ENCODE measurements at regions of chr21 and their contacts with region 1.

Region 1: GRCh38 chr21:33479679-33480480 is at the start of gene TMEM50B:
- DNase-seq: peak; percentile 96
- H3K4me3 Mint-ChIP-seq: peak within 1 kb of the TSS; percentile 90
- H3K27ac Mint-ChIP-seq: peak within 1 kb of the TSS; percentile 81
- H3K4me1 Mint-ChIP-seq: peaks cover 21% of the 10 kb centered on the region
- H3K27me3 Mint-ChIP-seq: peaks cover 4% of the 10 kb centered on the region
- total RNA-seq, gene TMEM50B: 26.5 to 28.2 TPM

Region 2: GRCh38 chr21:33491373-33492102 is 11.7 kb after region 1 on chr21 and contains the start of gene DNAJC28:
- CTCF ChIA-PET with region 1: interaction called, 13 read pairs
- POLR2A ChIA-PET with region 1: interaction called, 53 read pairs
- DNase-seq: peak; percentile 92
- H3K4me3 Mint-ChIP-seq: peak within 1 kb of the TSS; percentile 95
- H3K27ac Mint-ChIP-seq: peak within 1 kb of the TSS; percentile 59
- H3K4me1 Mint-ChIP-seq: peaks cover 10% of the 10 kb centered on the region
- H3K27me3 Mint-ChIP-seq: peaks cover 21% of the 10 kb centered on the region
- total RNA-seq, gene DNAJC28: 0.55 to 0.60 TPM

Region 3: GRCh38 chr21:33588485-33589335 is 108.8 kb after region 1 on chr21 and contains the start of gene DONSON:
- CTCF ChIA-PET with region 1: interaction called, 5 read pairs
- POLR2A ChIA-PET with region 1: interaction called, 27 read pairs
- DNase-seq: peak; percentile 89
- H3K4me3 Mint-ChIP-seq: peak within 1 kb of the TSS; percentile 94
- H3K27ac Mint-ChIP-seq: peak within 1 kb of the TSS; percentile 80
- H3K4me1 Mint-ChIP-seq: peaks cover 29% of the 10 kb centered on the region
- H3K27me3 Mint-ChIP-seq: no peaks in the 10 kb centered on the region
- total RNA-seq, gene DONSON: 35.4 to 35.5 TPM